IMR-90 (cell line): ENCODE measurements at regions of chr7 and their contacts with region 1.

Region 1: GRCh38 chr7:74002474-74003017 is 25.4 kb upstream of the ELN start:
- DNase-seq: peak; percentile 78
- ATAC-seq: peak; percentile 53
- H3K4me3 ChIP-seq: no peak overlapping the region
- H3K27ac ChIP-seq: peak overlapping the region; percentile 83
- H3K4me1 ChIP-seq: peaks cover 23% of the 10 kb centered on the region
- H3K27me3 ChIP-seq: no peaks in the 10 kb centered on the region
- CTCF ChIP-seq: no peak
- POLR2A ChIP-seq: no peak
- RAD21 ChIP-seq: peak; percentile 8; the same call in 1 of the 2 replicates

Region 2: GRCh38 chr7:73894733-73895551 is 107.6 kb before region 1 on chr7:
- CTCF ChIA-PET with region 1: no interaction called
- POLR2A ChIA-PET with region 1: no interaction called
- dilution Hi-C with region 1: no loop called
- in situ Hi-C with region 1: no loop called
- intact Hi-C with region 1: loop called (anchors 5 kb)
- DNase-seq: peak; percentile 96
- ATAC-seq: peak; percentile 93
- H3K4me3 ChIP-seq: no peak overlapping the region
- H3K27ac ChIP-seq: peak overlapping the region; percentile 65
- H3K4me1 ChIP-seq: peaks cover 43% of the 10 kb centered on the region
- H3K27me3 ChIP-seq: no peaks in the 10 kb centered on the region
- CTCF ChIP-seq: peak; percentile 31; the same call in 1 of the 2 replicates
- POLR2A ChIP-seq: no peak; the same call in 1 of the 2 replicates
- RAD21 ChIP-seq: peak; percentile 33

Region 3: GRCh38 chr7:73954181-73954580 is 48.4 kb before region 1 on chr7:
- CTCF ChIA-PET with region 1: no interaction called
- POLR2A ChIA-PET with region 1: no interaction called
- dilution Hi-C with region 1: loop called (anchors 10 kb)
- in situ Hi-C with region 1: no loop called
- intact Hi-C with region 1: no loop called
- DNase-seq: no peak
- ATAC-seq: no peak
- H3K4me3 ChIP-seq: no peak overlapping the region
- H3K27ac ChIP-seq: no peak overlapping the region
- H3K4me1 ChIP-seq: no peaks in the 10 kb centered on the region
- H3K27me3 ChIP-seq: peaks cover 1% of the 10 kb centered on the region; the same call in 1 of the 2 replicates
- CTCF ChIP-seq: no peak
- POLR2A ChIP-seq: no peak
- RAD21 ChIP-seq: no peak

Region 4: GRCh38 chr7:74020390-74020789 is 17.8 kb after region 1 on chr7:
- CTCF ChIA-PET with region 1: no interaction called
- POLR2A ChIA-PET with region 1: interaction called, 25 read pairs
- dilution Hi-C with region 1: no loop called
- in situ Hi-C with region 1: no loop called
- intact Hi-C with region 1: no loop called
- DNase-seq: no peak
- ATAC-seq: no peak
- H3K4me3 ChIP-seq: no peak overlapping the region
- H3K27ac ChIP-seq: no peak overlapping the region
- H3K4me1 ChIP-seq: peaks cover 13% of the 10 kb centered on the region
- H3K27me3 ChIP-seq: no peaks in the 10 kb centered on the region
- CTCF ChIP-seq: no peak
- POLR2A ChIP-seq: no peak
- RAD21 ChIP-seq: no peak

Region 5: DNA sequence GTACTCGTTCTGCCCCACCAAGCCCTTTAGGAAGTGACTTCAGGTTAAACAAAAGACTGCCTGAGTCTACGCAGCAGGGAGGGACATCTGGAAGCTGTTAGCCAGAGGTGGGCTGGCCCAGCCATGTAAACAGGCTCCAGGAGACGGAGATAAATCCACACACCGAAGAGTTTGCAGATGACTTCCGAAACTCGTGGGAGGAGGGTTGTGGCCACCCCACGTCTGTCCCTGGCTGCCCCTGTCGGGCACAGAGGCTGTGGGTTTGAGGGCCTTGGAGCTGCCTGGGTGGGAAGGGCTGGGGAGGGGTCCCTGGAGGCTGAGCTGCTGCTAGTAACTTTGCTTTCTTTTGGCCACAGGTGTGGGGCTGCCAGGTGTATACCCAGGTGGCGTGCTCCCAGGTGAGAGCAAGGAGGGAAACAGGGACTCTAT is 41.0 kb after region 1 on chr7:
- CTCF ChIA-PET with region 1: no interaction called
- POLR2A ChIA-PET with region 1: no interaction called
- dilution Hi-C with region 1: no loop called
- in situ Hi-C with region 1: no loop called
- intact Hi-C with region 1: no loop called
- DNase-seq: peak; percentile 64
- ATAC-seq: peak; percentile 83
- H3K4me3 ChIP-seq: no peak overlapping the region
- H3K27ac ChIP-seq: no peak overlapping the region
- H3K4me1 ChIP-seq: peaks cover 4% of the 10 kb centered on the region; the same call in 1 of the 2 replicates
- H3K27me3 ChIP-seq: no peaks in the 10 kb centered on the region
- CTCF ChIP-seq: no peak
- POLR2A ChIP-seq: no peak
- RAD21 ChIP-seq: no peak